ENCODE measurements at regions of chr17 and their contacts with region 1.

Region 1: DNA sequence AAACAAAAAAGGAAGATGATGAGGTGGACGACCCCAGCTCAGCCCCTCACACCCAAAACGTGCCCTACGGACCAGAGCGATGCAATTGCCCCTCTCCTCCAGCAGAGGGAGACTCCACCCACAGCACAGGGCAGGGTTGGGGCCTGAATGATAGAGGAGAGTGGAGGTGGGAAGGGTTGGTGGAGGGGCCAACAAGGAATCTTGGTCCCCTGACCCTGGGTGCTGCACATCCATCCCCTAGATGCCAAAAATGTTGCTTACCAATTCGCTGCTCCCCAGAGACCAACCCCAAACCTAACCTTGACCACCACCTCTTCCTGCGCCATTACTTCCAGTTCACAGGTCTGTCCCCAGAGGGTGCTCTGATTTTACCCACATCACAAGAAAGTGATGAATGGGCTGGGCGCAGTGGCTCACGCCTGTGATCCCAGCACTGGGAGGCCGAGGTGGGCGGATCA is 12.9 kb downstream of the P2RX5 start:
- DNase-seq: peak; percentile 29 to 54 (median 48)
- H3K4me3 ChIP-seq: no peak overlapping the region
- H3K4me3 Mint-ChIP-seq: no peak overlapping the region
- H3K27ac ChIP-seq: no peak overlapping the region
- H3K27ac Mint-ChIP-seq: peak overlapping the region in 1 of 7 donors; percentile 74
- H3K4me1 ChIP-seq: peaks cover 18 to 32% of the 10 kb centered on the region in 2 donors
- H3K4me1 Mint-ChIP-seq: peaks cover 28% of the 10 kb centered on the region
- H3K27me3 ChIP-seq: no peaks in the 10 kb centered on the region
- H3K27me3 Mint-ChIP-seq: peaks cover 6 to 15% (median 9%) of the 10 kb centered on the region in 3 donors
- CTCF ChIP-seq: peak; percentile 98

Region 2: DNA sequence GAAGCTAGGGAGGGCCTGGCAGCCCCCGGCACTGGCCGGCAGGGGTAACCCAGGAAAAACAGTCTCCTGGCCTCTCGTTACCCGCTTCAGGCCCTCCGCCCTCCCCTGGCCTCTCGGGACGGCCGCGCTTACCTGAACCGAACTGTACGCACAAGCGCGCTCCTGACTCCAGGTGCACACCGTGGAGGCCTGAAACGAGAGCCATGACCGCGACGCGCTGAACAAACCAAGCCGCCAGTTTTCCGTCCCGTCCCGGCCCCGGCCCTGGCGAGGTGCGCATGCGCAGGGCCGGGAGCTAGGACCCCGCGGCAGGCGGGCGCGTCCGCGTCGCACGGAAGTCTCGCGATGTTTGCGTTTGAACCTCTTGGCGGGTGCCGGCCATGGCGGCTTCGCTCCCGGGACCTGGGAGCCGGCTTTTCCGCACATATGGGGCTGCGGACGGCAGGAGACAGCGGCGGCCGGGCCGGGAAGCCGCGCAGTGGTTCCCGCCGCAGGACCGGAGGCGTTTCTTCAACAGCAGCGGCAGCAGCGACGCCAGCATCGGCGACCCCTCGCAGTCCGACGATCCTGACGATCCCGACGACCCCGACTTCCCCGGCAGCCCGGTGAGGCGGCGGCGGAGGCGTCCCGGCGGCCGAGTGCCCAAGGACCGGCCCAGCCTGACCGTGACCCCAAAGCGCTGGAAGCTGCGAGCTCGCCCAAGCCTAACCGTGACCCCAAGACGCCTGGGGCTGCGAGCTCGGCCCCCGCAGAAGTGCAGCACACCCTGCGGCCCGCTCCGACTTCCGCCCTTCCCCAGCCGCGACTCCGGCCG is 40.7 kb after region 1 on chr17 and contains the start of gene HASPIN:
- intact Hi-C with region 1: loop called (anchors 5 kb)
- DNase-seq: peak; percentile 85 to 91 (median 88)
- H3K4me3 ChIP-seq: peak within 1 kb of the TSS; percentile 88 to 94 (median 93)
- H3K4me3 Mint-ChIP-seq: peak within 1 kb of the TSS; percentile 90 to 97
- H3K27ac ChIP-seq: peak within 1 kb of the TSS; percentile 59 to 87
- H3K27ac Mint-ChIP-seq: peak within 1 kb of the TSS; percentile 84 to 96 (median 91)
- H3K4me1 ChIP-seq: peaks cover 49 to 58% of the 10 kb centered on the region in 2 donors
- H3K4me1 Mint-ChIP-seq: peaks cover 56% of the 10 kb centered on the region
- H3K27me3 ChIP-seq: no peaks in the 10 kb centered on the region
- H3K27me3 Mint-ChIP-seq: no peaks in the 10 kb centered on the region
- CTCF ChIP-seq: no peak
- polyA plus RNA-seq, gene HASPIN: 0.05 TPM in 1 of 3 donors, not detected in the others

Measured in CD14-positive monocyte (primary cell).